Stomach (tissue), 19 donors: ENCODE measurements at regions of chr4 and their contacts with region 1.

Region 1: GRCh38 chr4:21512353-21512752 is 436.2 kb downstream of the KCNIP4 start:
- DNase-seq: peak in 1 of 2 donors; percentile 69
- H3K4me3 ChIP-seq: no peak overlapping the region
- H3K27ac ChIP-seq: no peak overlapping the region
- H3K4me1 ChIP-seq: no peaks in the 10 kb centered on the region
- H3K27me3 ChIP-seq: no peaks in the 10 kb centered on the region
- CTCF ChIP-seq: peak in 2 of 7 experiments; percentile 5 to 30
- EP300 ChIP-seq: no peak
- POLR2A ChIP-seq: no peak

Region 2: GRCh38 chr4:21377046-21377445 is 135.3 kb before region 1 on chr4:
- intact Hi-C with region 1: no loop called
- DNase-seq: peak in 1 of 2 donors; percentile 3
- H3K4me3 ChIP-seq: no peak overlapping the region
- H3K27ac ChIP-seq: no peak overlapping the region
- H3K4me1 ChIP-seq: no peaks in the 10 kb centered on the region
- H3K27me3 ChIP-seq: no peaks in the 10 kb centered on the region
- CTCF ChIP-seq: no peak
- EP300 ChIP-seq: no peak
- POLR2A ChIP-seq: no peak

Region 3: DNA sequence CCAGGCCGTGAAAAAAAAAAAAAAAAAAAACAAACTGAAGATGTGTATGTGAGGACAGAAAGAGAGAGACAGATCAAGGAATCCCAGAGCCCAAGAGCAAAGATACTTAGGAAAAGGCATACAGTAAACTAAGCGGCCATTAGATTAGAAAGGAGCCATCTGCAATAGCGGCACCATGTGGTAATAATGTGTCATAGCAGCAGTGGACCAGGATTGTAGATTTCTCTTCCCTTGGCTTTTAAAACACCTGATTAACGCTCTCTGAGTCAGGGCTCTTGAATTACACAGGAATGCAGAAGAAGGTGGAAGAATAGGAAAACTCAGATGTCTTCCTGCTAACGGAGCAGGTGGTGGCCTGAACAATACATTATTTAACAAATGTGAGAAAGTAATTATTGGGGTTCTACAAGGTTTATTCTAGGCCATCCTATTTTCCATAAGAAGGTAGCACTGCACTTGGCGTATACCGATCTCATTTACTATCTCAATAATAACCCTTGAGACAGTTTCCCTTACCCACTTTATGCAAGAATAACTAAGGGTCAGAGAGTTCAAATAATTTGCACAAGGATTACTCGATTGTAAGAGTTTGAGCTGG is 253.6 kb after region 1 on chr4:
- intact Hi-C with region 1: loop called (anchors 10 kb)
- DNase-seq: peak; percentile 34 to 73
- H3K4me3 ChIP-seq: no peak overlapping the region
- H3K27ac ChIP-seq: no peak overlapping the region
- H3K4me1 ChIP-seq: peaks cover 0 to 3% (median 0%) of the 10 kb centered on the region in 4 donors
- H3K27me3 ChIP-seq: no peaks in the 10 kb centered on the region
- CTCF ChIP-seq: peak in 5 of 7 experiments; percentile 42 to 74 (median 70)
- EP300 ChIP-seq: no peak
- POLR2A ChIP-seq: no peak